ENCODE measurements at regions of chr18 and their contacts with region 1.

Region 1: DNA sequence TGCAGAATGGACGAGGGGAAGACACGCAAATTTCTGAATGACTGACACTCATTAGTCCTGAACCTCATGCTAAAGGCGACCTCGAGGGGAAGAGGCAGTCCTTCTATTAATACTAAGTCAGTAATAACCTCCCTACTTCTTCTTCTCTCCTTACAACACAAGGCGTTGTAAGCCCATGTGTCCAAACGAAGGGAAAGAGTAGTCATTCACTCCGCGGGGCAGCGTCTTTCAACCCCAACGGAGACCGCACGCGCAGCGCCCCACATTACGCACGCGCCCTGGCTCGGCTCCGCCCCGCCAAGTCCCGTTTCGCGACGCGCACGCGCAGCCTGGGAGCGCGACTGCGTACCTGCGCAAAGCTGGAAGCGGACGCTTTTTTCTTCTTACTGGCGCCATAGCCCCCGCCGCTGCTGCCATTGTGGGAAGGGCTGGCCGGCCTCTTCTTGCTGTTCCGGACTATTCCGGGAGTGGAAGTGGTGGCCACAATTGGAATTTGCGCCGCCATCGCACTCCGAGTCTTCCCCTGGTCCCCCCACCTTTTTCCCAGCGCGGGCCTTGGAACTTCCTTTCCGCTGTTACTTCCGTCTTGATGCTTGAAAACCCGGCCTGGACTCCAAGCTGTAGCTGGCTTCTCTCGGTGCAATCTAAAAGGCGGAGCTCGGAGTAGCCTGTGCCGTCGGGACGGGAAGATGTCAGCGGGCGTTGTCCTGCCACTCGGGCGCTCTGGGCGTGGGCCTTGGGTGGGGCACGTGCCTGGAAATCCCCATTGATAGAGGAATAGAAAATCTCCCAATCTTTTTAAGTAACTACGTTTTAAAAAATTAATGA is at the start of gene INO80C:
- DNase-seq: peak; percentile 91 to 98
- ATAC-seq: peak; percentile 88 to 95 (median 90)
- H3K4me3 ChIP-seq: peak within 1 kb of the TSS; percentile 76
- H3K4me3 Mint-ChIP-seq: peak within 1 kb of the TSS; percentile 100
- H3K27ac ChIP-seq: peak within 1 kb of the TSS; percentile 93
- H3K27ac Mint-ChIP-seq: peak within 1 kb of the TSS; percentile 97 to 99
- H3K4me1 ChIP-seq: peaks cover 15% of the 10 kb centered on the region
- H3K4me1 Mint-ChIP-seq: peaks cover 20 to 25% of the 10 kb centered on the region in 2 donors
- H3K27me3 ChIP-seq: no peaks in the 10 kb centered on the region
- H3K27me3 Mint-ChIP-seq: peaks cover 0 to 7% of the 10 kb centered on the region in 2 donors
- CTCF ChIP-seq: no peak
- total RNA-seq, gene INO80C: 17.6 to 19.5 (median 19.2) TPM

Region 2: GRCh38 chr18:34976899-34977837 is 520.4 kb before region 1 on chr18:
- intact Hi-C with region 1: loop called (anchors 5 kb)
- DNase-seq: peak; percentile 82 to 85
- ATAC-seq: peak; percentile 71 to 85 (median 82)
- H3K4me3 ChIP-seq: peak overlapping the region; percentile 100
- H3K4me3 Mint-ChIP-seq: peak overlapping the region; percentile 95
- H3K27ac ChIP-seq: peak overlapping the region; percentile 30
- H3K27ac Mint-ChIP-seq: peak overlapping the region; percentile 87 to 90
- H3K4me1 ChIP-seq: peaks cover 27% of the 10 kb centered on the region
- H3K4me1 Mint-ChIP-seq: peaks cover 27 to 36% of the 10 kb centered on the region in 2 donors
- H3K27me3 ChIP-seq: no peaks in the 10 kb centered on the region
- H3K27me3 Mint-ChIP-seq: peaks cover 7 to 16% of the 10 kb centered on the region in 2 donors
- CTCF ChIP-seq: no peak

Region 3: GRCh38 chr18:35240664-35241447 is 256.7 kb before region 1 on chr18 and contains the start of gene ZNF397:
- intact Hi-C with region 1: loop called (anchors 10 kb)
- DNase-seq: peak; percentile 95 to 97
- ATAC-seq: peak; percentile 96 to 99 (median 98)
- H3K4me3 ChIP-seq: peak within 1 kb of the TSS; percentile 60
- H3K4me3 Mint-ChIP-seq: peak within 1 kb of the TSS; percentile 97
- H3K27ac ChIP-seq: peak within 1 kb of the TSS; percentile 83
- H3K27ac Mint-ChIP-seq: peak within 1 kb of the TSS; percentile 97 to 98
- H3K4me1 ChIP-seq: peaks cover 4% of the 10 kb centered on the region
- H3K4me1 Mint-ChIP-seq: peaks cover 25 to 28% of the 10 kb centered on the region in 2 donors
- H3K27me3 ChIP-seq: no peaks in the 10 kb centered on the region
- H3K27me3 Mint-ChIP-seq: no peaks in the 10 kb centered on the region
- CTCF ChIP-seq: no peak
- total RNA-seq, gene ZNF397: 8.7 to 15.6 (median 13.9) TPM

Region 4: DNA sequence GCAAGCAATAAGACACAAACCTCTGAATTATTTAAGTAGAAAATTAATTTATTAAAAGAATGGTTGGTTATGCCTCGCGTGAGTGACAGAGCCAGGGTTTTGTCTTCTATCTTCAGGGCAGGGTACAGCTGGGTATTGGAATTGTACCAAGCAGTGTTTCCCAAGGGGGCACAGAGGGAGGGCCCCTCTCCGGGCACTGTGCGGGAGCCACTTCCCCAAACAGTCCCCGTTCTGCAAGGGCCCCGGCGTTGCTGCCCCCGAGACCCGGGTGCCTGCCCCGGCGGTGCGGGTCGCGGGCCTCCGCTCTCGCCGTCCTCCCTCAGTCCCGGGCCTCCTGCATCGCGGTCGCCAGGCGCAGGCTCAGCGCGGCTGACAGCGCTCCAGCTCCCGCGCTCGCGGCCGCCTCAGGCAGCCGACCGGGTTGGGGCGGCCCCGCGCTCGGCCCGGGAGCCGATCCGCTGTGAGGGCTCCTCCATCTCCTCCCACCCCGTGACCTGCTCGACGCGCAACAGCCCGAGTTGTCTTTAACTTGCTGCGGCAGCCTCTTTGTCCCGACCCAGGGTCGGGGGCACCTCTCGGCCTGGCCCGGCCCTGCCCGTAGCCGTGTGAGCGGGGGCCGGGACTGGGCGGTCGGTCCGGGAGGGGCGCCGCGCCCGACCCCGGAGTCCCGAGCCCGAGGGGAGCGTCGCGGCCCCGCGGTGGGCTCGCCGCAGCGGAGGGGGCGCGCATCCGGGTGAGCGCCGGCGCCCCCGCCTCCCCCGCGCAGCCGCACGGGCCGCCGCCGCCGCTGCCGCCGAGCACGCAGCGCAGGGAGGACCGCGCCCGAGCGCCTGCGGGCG is 83.3 kb after region 1 on chr18:
- intact Hi-C with region 1: loop called (anchors 5 kb)
- DNase-seq: peak; percentile 56 to 80
- ATAC-seq: peak; percentile 72 to 78 (median 77)
- H3K4me3 ChIP-seq: peak overlapping the region; percentile 54
- H3K4me3 Mint-ChIP-seq: peak overlapping the region; percentile 71
- H3K27ac ChIP-seq: peak overlapping the region; percentile 72
- H3K27ac Mint-ChIP-seq: peak overlapping the region in 1 of 2 donors; percentile 55
- H3K4me1 ChIP-seq: peaks cover 15% of the 10 kb centered on the region
- H3K4me1 Mint-ChIP-seq: peaks cover 21 to 27% of the 10 kb centered on the region in 2 donors
- H3K27me3 ChIP-seq: no peaks in the 10 kb centered on the region
- H3K27me3 Mint-ChIP-seq: peaks cover 0 to 3% of the 10 kb centered on the region in 2 donors
- CTCF ChIP-seq: no peak

Region 5: GRCh38 chr18:35616664-35617423 is 119.3 kb after region 1 on chr18:
- intact Hi-C with region 1: loop called (anchors 1 kb)
- DNase-seq: peak; percentile 41 to 79
- ATAC-seq: peak; percentile 94 to 98 (median 96)
- H3K4me3 ChIP-seq: no peak overlapping the region
- H3K4me3 Mint-ChIP-seq: no peak overlapping the region
- H3K27ac ChIP-seq: peak overlapping the region; percentile 76
- H3K27ac Mint-ChIP-seq: no peak overlapping the region
- H3K4me1 ChIP-seq: peaks cover 6% of the 10 kb centered on the region
- H3K4me1 Mint-ChIP-seq: peaks cover 21 to 30% of the 10 kb centered on the region in 2 donors
- H3K27me3 ChIP-seq: no peaks in the 10 kb centered on the region
- H3K27me3 Mint-ChIP-seq: no peaks in the 10 kb centered on the region
- CTCF ChIP-seq: no peak

Region 6: DNA sequence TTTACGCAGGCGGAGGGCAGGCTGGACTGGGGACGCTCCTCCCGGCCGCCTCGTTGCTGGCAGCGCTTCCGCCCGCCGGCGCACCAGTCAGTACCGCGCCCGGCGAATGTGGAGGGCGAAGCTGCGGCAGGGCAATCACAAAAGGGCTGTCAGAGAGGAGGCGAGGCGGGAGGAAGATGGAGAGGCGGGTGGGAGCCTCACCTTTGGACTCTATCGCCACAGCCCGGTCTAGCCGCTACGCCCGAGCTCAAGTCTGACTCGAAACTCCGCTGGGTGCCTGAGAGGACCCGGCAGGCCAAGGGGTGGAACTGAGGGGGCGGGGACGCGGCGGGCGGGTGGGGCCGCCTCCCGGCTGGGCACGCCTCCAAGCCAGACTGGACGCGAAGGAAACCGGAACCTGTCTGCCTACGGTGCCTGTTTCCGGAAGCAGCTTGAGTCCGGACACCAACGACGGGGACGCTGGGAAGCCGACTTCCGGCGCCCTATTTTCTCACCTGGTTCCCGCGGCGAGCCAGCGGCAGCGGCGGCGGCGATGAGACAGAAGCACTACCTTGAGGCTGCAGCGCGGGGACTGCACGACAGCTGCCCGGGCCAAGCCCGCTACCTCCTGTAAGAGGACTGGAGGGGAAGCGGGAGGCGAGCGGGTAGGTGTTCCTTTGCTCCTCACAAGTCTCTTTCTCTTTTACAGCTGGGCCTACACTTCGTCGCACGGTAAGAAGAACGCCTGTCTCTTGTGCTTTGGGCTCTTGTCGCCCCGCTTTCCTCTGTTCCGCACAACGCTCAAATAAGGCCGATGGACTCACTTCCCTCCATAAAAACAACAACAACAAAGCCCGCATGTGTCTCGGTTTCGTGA is 474.8 kb after region 1 on chr18 and contains the start of gene RMP24:
- intact Hi-C with region 1: loop called (anchors 5 kb)
- DNase-seq: peak; percentile 88 to 97
- ATAC-seq: peak; percentile 90 to 95 (median 91)
- H3K4me3 ChIP-seq: peak within 1 kb of the TSS; percentile 85
- H3K4me3 Mint-ChIP-seq: peak within 1 kb of the TSS; percentile 93
- H3K27ac ChIP-seq: peak within 1 kb of the TSS; percentile 83
- H3K27ac Mint-ChIP-seq: peak within 1 kb of the TSS; percentile 89 to 92
- H3K4me1 ChIP-seq: peaks cover 26% of the 10 kb centered on the region
- H3K4me1 Mint-ChIP-seq: peaks cover 44 to 47% of the 10 kb centered on the region in 2 donors
- H3K27me3 ChIP-seq: no peaks in the 10 kb centered on the region
- H3K27me3 Mint-ChIP-seq: no peaks in the 10 kb centered on the region
- CTCF ChIP-seq: no peak

Region 7: GRCh38 chr18:36129300-36130038 is 631.9 kb after region 1 on chr18 and contains the starts of genes ELP2 and SLC39A6:
- intact Hi-C with region 1: loop called (anchors 2 kb)
- DNase-seq: peak; percentile 96 to 99
- ATAC-seq: peak; percentile 86 to 94 (median 88)
- H3K4me3 ChIP-seq: peak within 1 kb of the TSS; percentile 90
- H3K4me3 Mint-ChIP-seq: peak within 1 kb of the TSS; percentile 95
- H3K27ac ChIP-seq: peak within 1 kb of the TSS; percentile 98
- H3K27ac Mint-ChIP-seq: peak within 1 kb of the TSS; percentile 96 to 97
- H3K4me1 ChIP-seq: peaks cover 36% of the 10 kb centered on the region
- H3K4me1 Mint-ChIP-seq: peaks cover 38 to 58% of the 10 kb centered on the region in 2 donors
- H3K27me3 ChIP-seq: no peaks in the 10 kb centered on the region
- H3K27me3 Mint-ChIP-seq: no peaks in the 10 kb centered on the region
- CTCF ChIP-seq: no peak
- total RNA-seq, gene ELP2: 119 to 135 (median 129) TPM
- total RNA-seq, gene SLC39A6: 15.2 to 18.8 (median 18.1) TPM

Measured in natural killer cell (primary cell).